HepG2 (cell line): ENCODE measurements at regions of chr3 and their contacts with region 1.

Region 1: GRCh38 chr3:60742606-60743145 is 508.6 kb downstream of the FHIT start:
- DNase-seq: peak; percentile 25
- ATAC-seq: peak; percentile 93
- H3K4me3 ChIP-seq: no peak overlapping the region
- H3K27ac ChIP-seq: no peak overlapping the region
- H3K4me1 ChIP-seq: peaks cover 27% of the 10 kb centered on the region
- H3K27me3 ChIP-seq: no peaks in the 10 kb centered on the region
- CTCF ChIP-seq: peak; percentile 70
- EP300 ChIP-seq: no peak
- POLR2A ChIP-seq: no peak
- RAD21 ChIP-seq: peak; percentile 28; the same call in 1 of the 2 replicates

Region 2: DNA sequence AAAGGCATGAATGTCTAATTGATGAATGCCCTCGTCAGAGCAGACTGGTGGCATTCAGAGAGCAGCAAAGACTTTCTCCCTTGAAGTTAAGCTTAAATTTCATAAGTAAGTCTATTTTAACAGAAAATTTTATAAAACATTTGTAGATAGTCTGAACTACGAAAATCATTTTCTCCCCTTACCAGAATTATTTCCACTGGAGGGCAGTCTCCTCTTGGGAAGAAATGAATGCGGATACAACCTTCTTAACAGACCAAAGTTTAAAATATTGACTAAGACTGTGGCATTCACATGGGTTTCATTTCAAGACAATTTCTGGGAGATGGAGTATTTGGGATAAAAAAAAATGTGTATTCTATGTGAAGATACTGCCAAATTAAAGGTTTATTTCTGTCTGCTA is 160.4 kb before region 1 on chr3:
- CTCF ChIA-PET with region 1: no interaction called
- POLR2A ChIA-PET with region 1: no interaction called
- in situ Hi-C with region 1: no loop called
- intact Hi-C with region 1: loop called (anchors 2 kb)
- DNase-seq: no peak
- ATAC-seq: no peak
- H3K4me3 ChIP-seq: no peak overlapping the region
- H3K27ac ChIP-seq: no peak overlapping the region
- H3K4me1 ChIP-seq: no peaks in the 10 kb centered on the region
- H3K27me3 ChIP-seq: no peaks in the 10 kb centered on the region
- CTCF ChIP-seq: 0 out of 2 replicates have a peak, but pooled peaks have one; percentile 28
- EP300 ChIP-seq: no peak
- POLR2A ChIP-seq: no peak
- RAD21 ChIP-seq: no peak